Activated T-helper 1 cell treated with anti-CD3 and anti-CD28 coated beads, Interleukin-12 subunit alpha, Interleukin-12 subunit beta, Interleukin-2, Interleukin-4 antibody, amounts not matched to agents 30 ng/mL and 10 ng/mL and 1 ng/mL, durations not matched to agents 14 hours and 24 hours and 36 hours (primary cell): ENCODE measurements at regions of chr1 and their contacts with region 1.

Region 1: GRCh38 chr1:154607609-154608396 is at the start of gene ADAR:
- DNase-seq: peak; percentile 93
- H3K4me3 Mint-ChIP-seq: peak within 1 kb of the TSS; percentile 94
- H3K27ac Mint-ChIP-seq: peak within 1 kb of the TSS; percentile 98
- H3K4me1 Mint-ChIP-seq: peaks cover 68% of the 10 kb centered on the region
- H3K27me3 Mint-ChIP-seq: no peaks in the 10 kb centered on the region
- total RNA-seq, gene ADAR: 299 and 301 TPM in 2 replicates

Region 2: GRCh38 chr1:154567386-154568156 is 40.2 kb before region 1 on chr1 and contains the start of gene CHRNB2:
- intact Hi-C with region 1: loop called (anchors 2 kb)
- DNase-seq: peak; percentile 79
- H3K4me3 Mint-ChIP-seq: no peak within 1 kb of the TSS
- H3K27ac Mint-ChIP-seq: peak within 1 kb of the TSS; percentile 47
- H3K4me1 Mint-ChIP-seq: peaks cover 10% of the 10 kb centered on the region
- H3K27me3 Mint-ChIP-seq: peaks cover 37% of the 10 kb centered on the region
- total RNA-seq, gene CHRNB2: not detected in 2 replicates

Region 3: GRCh38 chr1:154747740-154748404 is 140.1 kb after region 1 on chr1:
- intact Hi-C with region 1: loop called (anchors 5 kb)
- DNase-seq: peak; percentile 59
- H3K4me3 Mint-ChIP-seq: peak overlapping the region; percentile 85
- H3K27ac Mint-ChIP-seq: peak overlapping the region; percentile 94
- H3K4me1 Mint-ChIP-seq: peaks cover 82% of the 10 kb centered on the region
- H3K27me3 Mint-ChIP-seq: peaks cover 7% of the 10 kb centered on the region

Region 4: DNA sequence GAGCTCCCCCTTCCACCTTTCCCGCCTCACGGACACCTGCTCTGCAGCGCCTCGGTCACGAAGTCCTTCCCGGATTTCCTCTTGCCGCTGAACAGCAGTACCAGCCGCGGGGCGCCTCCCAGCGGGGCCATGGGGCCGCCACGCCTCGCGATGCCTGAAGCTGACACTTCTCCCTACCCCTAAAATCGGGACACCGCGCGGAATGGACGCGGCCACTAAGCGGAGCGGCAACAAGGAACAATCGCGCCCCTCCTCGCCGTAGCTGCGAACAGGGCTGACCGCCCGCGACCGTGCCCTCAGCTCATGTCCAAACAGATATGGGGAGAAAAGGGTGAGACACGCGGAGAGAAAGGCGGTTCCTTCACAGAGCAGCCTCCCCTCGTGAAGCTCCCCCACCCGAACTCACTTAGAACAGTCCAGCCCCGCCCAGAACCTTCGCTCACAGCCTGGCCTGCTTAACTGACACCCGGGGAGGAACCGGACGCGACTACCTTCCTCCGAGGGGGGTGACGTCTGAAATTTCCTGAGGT is 328.8 kb after region 1 on chr1 and contains the start of gene PMVK:
- intact Hi-C with region 1: loop called (anchors 1 kb)
- DNase-seq: peak; percentile 92
- H3K4me3 Mint-ChIP-seq: peak within 1 kb of the TSS; percentile 93
- H3K27ac Mint-ChIP-seq: peak within 1 kb of the TSS; percentile 95
- H3K4me1 Mint-ChIP-seq: peaks cover 53% of the 10 kb centered on the region
- H3K27me3 Mint-ChIP-seq: no peaks in the 10 kb centered on the region
- total RNA-seq, gene PMVK: 42.5 and 43.3 TPM in 2 replicates

Region 5: GRCh38 chr1:154974063-154974807 is 366.4 kb after region 1 on chr1 and contains the start of gene CKS1B:
- intact Hi-C with region 1: loop called (anchors 1 kb)
- DNase-seq: peak; percentile 95
- H3K4me3 Mint-ChIP-seq: no peak within 1 kb of the TSS
- H3K27ac Mint-ChIP-seq: no peak within 1 kb of the TSS
- H3K4me1 Mint-ChIP-seq: peaks cover 36% of the 10 kb centered on the region
- H3K27me3 Mint-ChIP-seq: no peaks in the 10 kb centered on the region
- total RNA-seq, gene CKS1B: 151 and 158 TPM in 2 replicates

Region 6: DNA sequence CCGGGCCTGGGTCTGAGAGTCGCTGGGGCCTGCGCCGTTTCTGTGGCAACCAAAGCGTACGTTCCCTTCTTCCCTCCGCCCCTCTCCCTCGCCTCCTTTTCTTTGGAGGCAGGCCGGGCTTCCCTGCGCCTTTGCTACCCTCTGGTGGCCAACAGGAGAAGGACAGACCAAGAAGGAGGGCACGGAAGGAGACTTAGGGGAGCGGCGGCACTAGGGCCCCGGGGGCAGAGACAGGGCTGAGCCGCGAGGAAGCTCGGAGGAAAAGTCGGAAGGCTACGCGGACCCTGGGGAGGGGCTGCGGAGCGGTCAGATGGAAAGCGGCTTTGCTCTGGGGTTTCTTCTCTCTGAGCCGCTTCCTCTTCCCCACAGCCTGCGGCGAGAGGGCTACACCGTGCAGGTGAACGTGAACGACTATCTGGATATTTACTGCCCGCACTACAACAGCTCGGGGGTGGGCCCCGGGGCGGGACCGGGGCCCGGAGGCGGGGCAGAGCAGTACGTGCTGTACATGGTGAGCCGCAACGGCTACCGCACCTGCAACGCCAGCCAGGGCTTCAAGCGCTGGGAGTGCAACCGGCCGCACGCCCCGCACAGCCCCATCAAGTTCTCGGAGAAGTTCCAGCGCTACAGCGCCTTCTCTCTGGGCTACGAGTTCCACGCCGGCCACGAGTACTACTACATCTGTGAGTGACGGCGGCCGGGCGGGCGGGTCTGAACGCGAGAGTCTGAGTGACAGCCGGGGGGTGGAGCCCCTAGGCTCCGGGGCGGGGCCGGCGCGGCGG is 477.1 kb after region 1 on chr1:
- intact Hi-C with region 1: loop called (anchors 5 kb)
- DNase-seq: peak; percentile 89
- H3K4me3 Mint-ChIP-seq: peak overlapping the region; percentile 88
- H3K27ac Mint-ChIP-seq: peak overlapping the region; percentile 94
- H3K4me1 Mint-ChIP-seq: peaks cover 34% of the 10 kb centered on the region
- H3K27me3 Mint-ChIP-seq: peaks cover 31% of the 10 kb centered on the region

Region 7: GRCh38 chr1:155172732-155173477 is 565.1 kb after region 1 on chr1 and contains the start of gene KRTCAP2:
- intact Hi-C with region 1: loop called (anchors 10 kb)
- DNase-seq: peak; percentile 94
- H3K4me3 Mint-ChIP-seq: peak within 1 kb of the TSS; percentile 96
- H3K27ac Mint-ChIP-seq: peak within 1 kb of the TSS; percentile 97
- H3K4me1 Mint-ChIP-seq: peaks cover 49% of the 10 kb centered on the region
- H3K27me3 Mint-ChIP-seq: no peaks in the 10 kb centered on the region
- total RNA-seq, gene KRTCAP2: 230 and 238 TPM in 2 replicates